CD8-positive, alpha-beta memory T cell (primary cell): ENCODE measurements at regions of chr3 and their contacts with region 1.

Region 1: DNA sequence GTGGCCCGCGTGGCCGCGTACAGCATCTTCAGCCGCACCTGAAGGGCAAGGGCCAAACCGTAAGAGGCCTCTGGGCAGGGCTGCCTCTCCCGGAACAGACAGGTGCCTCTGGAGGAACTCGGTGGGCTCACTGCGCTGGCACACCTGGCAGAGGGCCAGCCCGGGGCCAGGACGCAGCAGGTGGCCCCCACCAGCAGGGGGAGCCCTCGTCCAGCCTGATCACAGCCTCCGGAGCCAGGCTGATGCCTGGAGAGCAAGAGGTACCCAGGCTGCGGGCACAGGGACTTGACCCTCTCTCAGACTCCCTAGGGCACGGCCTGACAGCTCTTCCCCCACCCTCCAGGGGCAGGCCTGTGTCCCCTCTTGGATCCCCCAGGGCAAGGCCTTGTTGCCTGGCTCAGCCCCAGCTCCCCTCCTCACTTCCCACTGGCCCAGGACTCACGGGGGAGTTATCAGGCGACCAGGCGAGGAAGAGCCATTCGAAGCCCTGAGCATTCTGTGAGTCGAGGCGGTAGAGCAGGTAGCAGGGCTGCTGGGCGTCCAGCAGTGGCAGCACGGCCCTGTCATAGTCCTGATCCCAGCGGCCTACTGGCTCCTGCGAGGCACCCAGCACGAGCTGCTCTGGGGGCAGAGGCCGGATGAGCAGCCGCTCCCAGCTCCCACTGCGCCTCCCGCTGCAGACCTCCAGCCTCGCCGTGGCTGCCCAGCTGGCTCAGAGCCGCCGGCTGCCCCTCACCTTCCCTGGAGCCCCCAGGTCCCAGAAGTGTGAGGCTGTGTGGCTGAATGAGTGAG is 6.3 kb upstream of the TLR9 start:
- DNase-seq: peak; percentile 81 to 90 (median 88)
- H3K4me3 ChIP-seq: no peak overlapping the region
- H3K4me3 Mint-ChIP-seq: peak overlapping the region; percentile 31 to 66 (median 59)
- H3K27ac ChIP-seq: no peak overlapping the region
- H3K27ac Mint-ChIP-seq: peak overlapping the region; percentile 13 to 95 (median 86)
- H3K4me1 ChIP-seq: peaks cover 53% of the 10 kb centered on the region
- H3K4me1 Mint-ChIP-seq: peaks cover 39 to 71% (median 53%) of the 10 kb centered on the region in 3 donors
- H3K27me3 ChIP-seq: no peaks in the 10 kb centered on the region
- H3K27me3 Mint-ChIP-seq: peaks cover 0 to 2% of the 10 kb centered on the region in 2 donors

Region 2: DNA sequence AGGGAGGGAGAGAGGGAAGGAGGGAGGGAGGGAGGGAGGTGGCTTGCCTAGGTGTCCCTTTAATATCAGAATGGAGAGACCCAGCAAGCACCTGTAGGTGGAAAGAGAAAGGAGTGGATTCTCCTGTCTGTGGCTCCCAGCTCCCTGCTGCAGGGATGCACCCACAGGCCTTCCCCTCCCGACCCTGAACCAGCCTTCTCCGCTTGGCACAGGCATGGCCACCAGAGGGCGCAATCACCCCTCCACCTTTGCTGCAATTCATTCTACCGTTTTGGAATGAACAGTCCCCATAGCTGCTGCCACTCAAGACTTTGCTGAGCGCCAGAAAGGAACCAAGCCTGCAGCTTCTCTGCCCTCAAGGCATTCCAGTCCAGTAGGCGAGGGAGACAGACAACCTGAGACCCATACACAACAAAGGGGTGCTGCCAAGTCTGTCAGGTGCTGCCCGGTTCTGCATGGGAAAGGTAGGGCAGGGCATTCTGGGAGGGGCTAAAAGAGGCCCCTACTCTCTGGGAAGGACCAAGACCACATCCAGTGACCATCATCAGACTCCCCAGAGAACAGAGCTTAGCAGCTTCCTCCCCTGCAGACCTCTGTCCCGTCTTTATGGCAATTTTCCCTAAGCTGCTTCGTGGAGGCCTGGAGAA is 11.2 kb before region 1 on chr3:
- CTCF ChIA-PET with region 1: interaction called, 106 read pairs
- POLR2A ChIA-PET with region 1: interaction called, 4 read pairs
- DNase-seq: peak; percentile 77 to 89 (median 82)
- H3K4me3 ChIP-seq: no peak overlapping the region
- H3K4me3 Mint-ChIP-seq: peak overlapping the region; percentile 46 to 81 (median 69)
- H3K27ac ChIP-seq: no peak overlapping the region
- H3K27ac Mint-ChIP-seq: peak overlapping the region in 7 of 8 donors; percentile 26 to 91 (median 85)
- H3K4me1 ChIP-seq: peaks cover 91% of the 10 kb centered on the region
- H3K4me1 Mint-ChIP-seq: peaks cover 79 to 93% (median 81%) of the 10 kb centered on the region in 3 donors
- H3K27me3 ChIP-seq: no peaks in the 10 kb centered on the region
- H3K27me3 Mint-ChIP-seq: no peaks in the 10 kb centered on the region

Region 3: GRCh38 chr3:52253314-52254304 is 21.9 kb after region 1 on chr3:
- CTCF ChIA-PET with region 1: interaction called, 71 read pairs
- POLR2A ChIA-PET with region 1: interaction called, 17 read pairs
- DNase-seq: peak; percentile 70 to 95 (median 94)
- H3K4me3 ChIP-seq: peak overlapping the region; percentile 57
- H3K4me3 Mint-ChIP-seq: peak overlapping the region; percentile 76 to 92 (median 89)
- H3K27ac ChIP-seq: peak overlapping the region; percentile 77
- H3K27ac Mint-ChIP-seq: peak overlapping the region; percentile 95 to 100 (median 100)
- H3K4me1 ChIP-seq: peaks cover 93% of the 10 kb centered on the region
- H3K4me1 Mint-ChIP-seq: peaks cover 77 to 96% (median 93%) of the 10 kb centered on the region in 3 donors
- H3K27me3 ChIP-seq: no peaks in the 10 kb centered on the region
- H3K27me3 Mint-ChIP-seq: peaks cover 0 to 2% of the 10 kb centered on the region in 2 donors

Region 4: GRCh38 chr3:52278510-52279069 is 46.9 kb after region 1 on chr3 and contains the start of gene WDR82:
- CTCF ChIA-PET with region 1: interaction called, 74 read pairs
- POLR2A ChIA-PET with region 1: interaction called, 39 read pairs
- DNase-seq: peak; percentile 95 to 99 (median 96)
- H3K4me3 ChIP-seq: peak within 1 kb of the TSS; percentile 79
- H3K4me3 Mint-ChIP-seq: peak within 1 kb of the TSS; percentile 93 to 100 (median 97)
- H3K27ac ChIP-seq: peak within 1 kb of the TSS; percentile 84
- H3K27ac Mint-ChIP-seq: peak within 1 kb of the TSS; percentile 90 to 100 (median 99)
- H3K4me1 ChIP-seq: peaks cover 55% of the 10 kb centered on the region
- H3K4me1 Mint-ChIP-seq: peaks cover 58 to 80% (median 69%) of the 10 kb centered on the region in 3 donors
- H3K27me3 ChIP-seq: no peaks in the 10 kb centered on the region
- H3K27me3 Mint-ChIP-seq: peaks cover 0 to 2% of the 10 kb centered on the region in 2 donors
- total RNA-seq, gene WDR82: 133 to 140 TPM

Region 5: GRCh38 chr3:52333869-52334557 is 102.3 kb after region 1 on chr3:
- CTCF ChIA-PET with region 1: interaction called, 115 read pairs
- POLR2A ChIA-PET with region 1: interaction called, 4 read pairs
- DNase-seq: no peak
- H3K4me3 ChIP-seq: no peak overlapping the region
- H3K4me3 Mint-ChIP-seq: no peak overlapping the region
- H3K27ac ChIP-seq: no peak overlapping the region
- H3K27ac Mint-ChIP-seq: peak overlapping the region in 1 of 8 donors; percentile 47
- H3K4me1 ChIP-seq: no peaks in the 10 kb centered on the region
- H3K4me1 Mint-ChIP-seq: no peaks in the 10 kb centered on the region
- H3K27me3 ChIP-seq: no peaks in the 10 kb centered on the region
- H3K27me3 Mint-ChIP-seq: no peaks in the 10 kb centered on the region

Region 6: DNA sequence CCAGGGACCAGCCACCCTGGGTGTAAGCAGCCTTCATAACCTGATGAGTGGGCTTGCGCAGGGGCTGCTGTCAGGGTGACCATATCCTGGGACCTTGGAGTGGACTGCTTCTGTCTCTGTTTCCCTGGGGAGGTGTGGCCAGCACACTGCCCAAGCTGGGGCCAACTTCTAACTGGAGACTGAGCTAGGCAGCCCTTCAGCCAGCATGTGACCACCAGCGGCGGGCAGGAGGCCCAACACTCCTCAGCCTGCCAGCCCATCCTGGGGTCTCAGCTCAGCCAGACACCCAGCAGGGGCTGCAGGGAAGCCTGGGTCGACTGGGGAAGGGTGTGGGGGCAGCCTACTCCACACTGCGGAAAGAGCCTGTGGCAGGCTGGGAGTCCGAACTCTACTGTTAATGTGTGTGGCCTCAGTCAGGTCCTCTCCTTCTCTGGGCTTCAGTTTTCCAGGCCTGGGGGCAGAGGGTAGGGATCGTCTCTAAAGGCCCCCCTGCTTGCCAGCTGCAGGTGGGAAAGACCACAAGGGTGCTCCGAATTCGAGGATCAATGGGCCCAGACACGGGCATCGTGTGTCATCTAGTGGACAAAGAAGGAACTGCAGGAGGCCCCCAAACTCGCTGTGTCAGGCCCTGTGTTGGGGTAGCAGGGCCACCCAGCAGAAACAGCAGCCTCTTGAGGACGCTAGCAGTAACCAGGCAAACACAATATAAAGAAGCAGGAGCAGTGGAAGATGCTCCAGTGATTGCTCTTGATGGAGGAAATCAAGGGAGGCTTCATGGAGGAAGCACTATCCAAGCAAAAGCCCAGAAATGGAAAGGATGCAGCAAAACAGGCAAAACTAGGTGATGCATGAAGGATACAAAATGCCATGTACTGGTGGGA is 215.2 kb after region 1 on chr3:
- CTCF ChIA-PET with region 1: interaction called, 13 read pairs
- POLR2A ChIA-PET with region 1: no interaction called
- DNase-seq: peak; percentile 59 to 79 (median 65)
- H3K4me3 ChIP-seq: no peak overlapping the region
- H3K4me3 Mint-ChIP-seq: peak overlapping the region in 1 of 7 donors; percentile 15
- H3K27ac ChIP-seq: no peak overlapping the region
- H3K27ac Mint-ChIP-seq: peak overlapping the region in 4 of 8 donors; percentile 0 to 92 (median 29)
- H3K4me1 ChIP-seq: peaks cover 12% of the 10 kb centered on the region
- H3K4me1 Mint-ChIP-seq: peaks cover 7 to 10% (median 9%) of the 10 kb centered on the region in 3 donors
- H3K27me3 ChIP-seq: no peaks in the 10 kb centered on the region
- H3K27me3 Mint-ChIP-seq: peaks cover 0 to 1% of the 10 kb centered on the region in 2 donors